Activated CD8-positive, alpha-beta memory T cell treated with anti-CD3 and anti-CD28 coated beads, Interleukin-2, amount 10 ng/mL, durations not matched to agents 7 days and 5 days (primary cell): ENCODE measurements at regions of chr10 and their contacts with region 1.

Region 1: DNA sequence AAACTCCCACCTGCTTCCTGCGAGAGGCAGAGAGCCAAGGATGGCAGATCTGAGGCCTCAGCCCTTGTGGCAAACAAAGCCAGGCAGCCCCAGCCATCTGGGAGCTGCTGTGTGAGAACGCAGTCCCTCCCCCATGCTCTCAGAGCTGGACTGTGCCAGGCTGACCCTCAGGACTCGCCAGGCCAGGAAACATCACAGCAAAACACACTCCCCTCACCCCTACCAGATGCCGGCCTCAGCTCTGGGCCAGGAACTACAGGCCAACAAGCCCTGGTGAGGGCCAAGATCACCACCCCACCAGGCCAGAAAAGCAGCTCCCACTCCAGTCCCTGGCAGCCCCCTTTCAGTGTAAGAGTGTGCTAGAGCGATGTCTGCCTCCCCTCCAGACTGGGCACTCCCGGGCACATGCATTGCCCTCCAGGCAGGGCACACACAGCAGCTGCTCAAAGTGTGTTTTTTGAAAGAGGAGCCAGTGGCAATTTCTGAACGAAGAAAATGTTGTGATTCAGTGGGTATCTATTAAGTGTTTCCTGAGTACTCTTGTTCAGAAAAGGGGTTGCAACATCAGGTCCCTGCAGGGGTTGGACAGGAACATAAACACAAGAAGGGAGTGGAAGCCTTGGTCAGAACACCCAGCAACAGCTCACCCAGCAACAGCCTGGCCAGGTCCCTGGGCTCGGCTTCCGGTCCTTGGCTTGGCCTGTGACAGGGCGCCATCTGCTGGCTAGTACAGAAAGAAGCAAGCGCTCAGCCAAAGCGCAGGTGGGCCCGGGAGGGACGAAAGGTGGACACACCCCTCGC is 18.3 kb downstream of the LRRC20 start:
- DNase-seq: peak; percentile 93
- ATAC-seq: peak; percentile 99
- H3K4me3 Mint-ChIP-seq: peak overlapping the region; percentile 12
- H3K27ac Mint-ChIP-seq: peak overlapping the region; percentile 74
- H3K4me1 Mint-ChIP-seq: peaks cover 31% of the 10 kb centered on the region
- H3K27me3 Mint-ChIP-seq: no peaks in the 10 kb centered on the region

Region 2: DNA sequence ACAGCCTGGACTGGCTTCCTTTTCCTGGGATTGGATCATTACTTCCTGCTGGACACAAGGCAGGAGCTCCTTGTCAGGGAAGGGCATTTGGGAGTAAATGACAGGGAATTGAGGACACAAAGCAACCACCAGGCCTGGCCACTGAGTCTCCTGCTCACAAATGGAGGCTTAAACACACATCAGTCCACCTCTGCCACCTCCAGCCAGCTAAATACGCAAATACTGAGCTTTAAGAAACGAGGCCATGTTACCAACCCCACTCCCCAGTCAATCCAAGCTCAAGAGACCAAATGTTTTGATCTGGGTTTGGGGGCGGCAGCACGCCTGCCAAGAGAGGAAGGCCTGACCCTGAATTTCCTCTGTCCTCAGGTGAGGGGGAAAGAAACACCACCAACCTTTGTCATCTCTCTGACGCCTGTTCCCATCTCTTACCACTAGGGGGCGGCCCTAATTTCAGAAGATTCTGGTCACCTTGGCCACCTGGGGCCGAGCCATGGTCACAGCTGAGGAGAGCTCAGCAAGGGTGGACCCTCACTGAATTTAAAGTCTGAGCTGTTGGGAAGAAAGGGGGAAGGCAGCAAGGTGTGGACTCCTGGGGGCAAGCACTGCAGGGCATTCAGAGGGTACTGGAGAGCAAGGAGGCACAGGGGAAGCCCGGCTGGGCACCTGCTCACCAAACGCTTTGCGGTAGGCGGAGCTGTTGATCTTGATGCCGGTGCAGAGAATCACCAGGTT is 248.1 kb before region 1 on chr10:
- CTCF ChIA-PET with region 1: interaction called, 17 read pairs
- DNase-seq: peak; percentile 67
- ATAC-seq: peak; percentile 79
- H3K4me3 Mint-ChIP-seq: no peak overlapping the region
- H3K27ac Mint-ChIP-seq: no peak overlapping the region
- H3K4me1 Mint-ChIP-seq: peaks cover 11% of the 10 kb centered on the region
- H3K27me3 Mint-ChIP-seq: no peaks in the 10 kb centered on the region

Region 3: DNA sequence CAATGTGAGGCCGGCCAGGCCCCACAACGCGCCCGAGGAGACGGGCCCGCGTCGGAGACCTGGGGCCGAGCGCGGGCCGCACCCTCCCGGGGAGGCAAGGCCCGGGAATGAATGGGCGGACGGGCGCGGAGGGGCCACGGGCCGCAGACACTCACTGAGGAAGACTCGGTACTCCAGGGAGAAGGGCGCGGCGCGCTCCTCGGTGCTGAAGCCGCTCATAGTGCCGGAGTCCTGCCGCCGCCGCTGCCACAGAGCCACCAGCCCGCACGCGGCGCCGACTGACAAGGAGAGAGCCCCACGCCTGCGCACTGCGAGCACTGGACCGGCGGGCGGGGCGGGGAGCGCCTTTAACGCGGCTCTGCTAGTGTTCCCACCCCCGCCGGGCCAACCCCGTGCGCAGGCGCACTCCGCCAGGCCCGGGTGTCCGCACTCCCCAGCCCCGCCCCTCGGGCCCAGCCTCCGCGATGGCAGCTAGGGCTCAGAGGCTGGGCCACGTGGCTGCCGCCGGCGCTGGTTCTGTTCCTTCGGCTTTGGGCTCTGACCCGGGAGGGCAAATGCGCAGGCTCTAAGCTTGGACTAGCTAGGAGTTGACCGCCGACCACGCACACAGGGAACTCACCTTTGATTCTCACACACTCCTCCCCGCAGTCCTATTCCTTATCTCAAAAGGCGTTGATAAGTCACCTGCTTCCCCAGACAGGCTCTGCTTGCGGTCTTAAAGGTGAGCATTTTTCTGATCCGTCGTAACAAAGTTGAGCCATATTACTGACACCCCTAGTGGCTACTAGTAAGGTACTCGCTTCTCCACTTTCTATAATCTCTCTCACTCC is 130.8 kb before region 1 on chr10 and contains the start of gene PPA1:
- CTCF ChIA-PET with region 1: interaction called, 512 read pairs
- DNase-seq: peak; percentile 99
- ATAC-seq: peak; percentile 96
- H3K4me3 Mint-ChIP-seq: peak within 1 kb of the TSS; percentile 88
- H3K27ac Mint-ChIP-seq: peak within 1 kb of the TSS; percentile 89
- H3K4me1 Mint-ChIP-seq: peaks cover 44% of the 10 kb centered on the region
- H3K27me3 Mint-ChIP-seq: no peaks in the 10 kb centered on the region
- total RNA-seq, gene PPA1: 157 to 192 TPM

Region 4: GRCh38 chr10:70283445-70284399 is 80.4 kb before region 1 on chr10 and contains the start of gene NPFFR1:
- CTCF ChIA-PET with region 1: interaction called, 10 read pairs
- DNase-seq: no peak
- ATAC-seq: no peak
- H3K4me3 Mint-ChIP-seq: no peak within 1 kb of the TSS
- H3K27ac Mint-ChIP-seq: no peak within 1 kb of the TSS
- H3K4me1 Mint-ChIP-seq: no peaks in the 10 kb centered on the region
- H3K27me3 Mint-ChIP-seq: peaks cover 76% of the 10 kb centered on the region
- total RNA-seq, gene NPFFR1: not detected

Region 5: GRCh38 chr10:70348228-70348850 is 15.8 kb before region 1 on chr10:
- CTCF ChIA-PET with region 1: interaction called, 66 read pairs
- DNase-seq: peak; percentile 64
- ATAC-seq: peak; percentile 77
- H3K4me3 Mint-ChIP-seq: no peak overlapping the region
- H3K27ac Mint-ChIP-seq: no peak overlapping the region
- H3K4me1 Mint-ChIP-seq: peaks cover 8% of the 10 kb centered on the region
- H3K27me3 Mint-ChIP-seq: no peaks in the 10 kb centered on the region

Region 6: GRCh38 chr10:70381471-70382421 is 17.6 kb after region 1 on chr10:
- CTCF ChIA-PET with region 1: interaction called, 51 read pairs
- DNase-seq: peak; percentile 65
- ATAC-seq: peak; percentile 52
- H3K4me3 Mint-ChIP-seq: peak overlapping the region; percentile 81
- H3K27ac Mint-ChIP-seq: peak overlapping the region; percentile 19
- H3K4me1 Mint-ChIP-seq: peaks cover 11% of the 10 kb centered on the region
- H3K27me3 Mint-ChIP-seq: no peaks in the 10 kb centered on the region

Region 7: DNA sequence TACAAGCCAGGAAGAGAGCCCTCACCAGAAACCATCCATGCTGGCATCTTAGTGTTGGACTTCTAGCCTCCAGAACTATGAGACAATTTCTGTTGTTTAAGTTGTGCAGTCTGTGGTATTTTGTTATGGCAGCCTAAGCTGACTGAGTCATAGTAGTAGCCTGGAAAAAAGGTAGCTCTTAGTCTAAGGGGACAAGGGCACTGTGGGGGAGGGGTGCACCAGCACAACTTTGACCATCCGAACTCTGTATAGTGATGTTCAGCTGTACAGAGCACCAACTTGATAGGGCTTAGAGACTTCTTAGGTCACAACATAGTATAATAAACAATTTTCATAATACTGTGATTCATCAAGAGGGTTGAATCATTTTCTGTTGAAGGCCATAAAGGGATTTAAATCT is 54.1 kb after region 1 on chr10:
- CTCF ChIA-PET with region 1: no interaction called
- DNase-seq: no peak
- ATAC-seq: no peak
- H3K4me3 Mint-ChIP-seq: no peak overlapping the region
- H3K27ac Mint-ChIP-seq: peak overlapping the region; percentile 33
- H3K4me1 Mint-ChIP-seq: peaks cover 29% of the 10 kb centered on the region
- H3K27me3 Mint-ChIP-seq: no peaks in the 10 kb centered on the region

Region 8: DNA sequence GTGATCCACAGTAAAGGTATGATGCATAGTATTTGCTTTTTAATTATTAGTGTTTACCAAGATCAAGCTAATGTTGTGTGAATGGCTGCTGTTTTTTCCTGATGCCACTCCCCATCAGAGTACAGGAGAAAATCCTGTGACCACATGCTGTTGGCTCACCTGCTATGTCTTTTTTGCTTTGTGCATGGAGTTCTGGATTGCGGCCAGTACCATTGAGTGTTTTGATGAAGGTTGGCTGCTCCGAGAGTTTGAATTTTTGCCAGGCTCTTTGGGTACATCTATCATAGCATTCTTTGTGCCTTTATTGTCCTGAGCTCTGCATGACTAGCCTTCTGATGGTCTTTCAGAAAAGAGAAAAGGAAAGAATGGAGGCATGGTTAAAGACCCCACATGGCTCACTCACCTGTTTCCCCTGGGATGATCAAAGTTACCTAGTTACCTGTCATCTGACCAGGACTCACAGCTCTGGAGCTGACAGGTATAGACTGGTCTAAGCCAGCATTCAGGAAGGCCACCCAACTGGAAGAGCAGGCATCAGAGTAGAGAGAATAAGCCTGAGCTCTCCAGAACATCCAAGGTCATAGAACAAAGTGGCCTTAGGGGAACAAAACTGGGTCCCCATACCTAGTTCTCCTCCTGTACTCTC is 439.7 kb after region 1 on chr10:
- CTCF ChIA-PET with region 1: no interaction called
- DNase-seq: no peak
- ATAC-seq: no peak
- H3K4me3 Mint-ChIP-seq: no peak overlapping the region
- H3K27ac Mint-ChIP-seq: no peak overlapping the region
- H3K4me1 Mint-ChIP-seq: no peaks in the 10 kb centered on the region
- H3K27me3 Mint-ChIP-seq: peaks cover 38% of the 10 kb centered on the region